Activated T-helper 1 cell treated with anti-CD3 and anti-CD28 coated beads, Interleukin-12 subunit alpha, Interleukin-12 subunit beta, Interleukin-2, Interleukin-4 antibody, amounts not matched to agents 30 ng/mL and 10 ng/mL and 1 ng/mL, durations not matched to agents 14 hours and 24 hours and 36 hours (primary cell): ENCODE measurements at regions of chr10 and their contacts with region 1.

Region 1: GRCh38 chr10:21166557-21167287 is 269.6 kb upstream of the NEBL start:
- DNase-seq: no peak
- H3K4me3 Mint-ChIP-seq: no peak overlapping the region
- H3K27ac Mint-ChIP-seq: no peak overlapping the region
- H3K4me1 Mint-ChIP-seq: no peaks in the 10 kb centered on the region
- H3K27me3 Mint-ChIP-seq: no peaks in the 10 kb centered on the region

Region 2: GRCh38 chr10:21724695-21725367 is 558.1 kb after region 1 on chr10:
- intact Hi-C with region 1: loop called (anchors 5 kb)
- DNase-seq: no peak
- H3K4me3 Mint-ChIP-seq: no peak overlapping the region
- H3K27ac Mint-ChIP-seq: no peak overlapping the region
- H3K4me1 Mint-ChIP-seq: peaks cover 14% of the 10 kb centered on the region
- H3K27me3 Mint-ChIP-seq: no peaks in the 10 kb centered on the region